Activated CD8-positive, alpha-beta T cell treated with anti-CD3 and anti-CD28 coated beads, Interleukin-2, amount 10 ng/mL, durations not matched to agents 7 days and 5 days (primary cell): ENCODE measurements at regions of chr1 and their contacts with region 1.

Region 1: GRCh38 chr1:93078986-93079654 is at the start of gene MTF2:
- DNase-seq: peak; percentile 96
- ATAC-seq: peak; percentile 94
- H3K4me3 Mint-ChIP-seq: peak within 1 kb of the TSS; percentile 97
- H3K27ac Mint-ChIP-seq: peak within 1 kb of the TSS; percentile 98
- H3K4me1 Mint-ChIP-seq: peaks cover 37% of the 10 kb centered on the region
- H3K27me3 Mint-ChIP-seq: peaks cover 2% of the 10 kb centered on the region
- total RNA-seq, gene MTF2: 56.4 to 63.2 TPM

Region 2: GRCh38 chr1:92511541-92511940 is 567.6 kb before region 1 on chr1:
- CTCF ChIA-PET with region 1: no interaction called
- POLR2A ChIA-PET with region 1: no interaction called
- DNase-seq: no peak
- ATAC-seq: no peak
- H3K4me3 Mint-ChIP-seq: no peak overlapping the region
- H3K27ac Mint-ChIP-seq: no peak overlapping the region
- H3K4me1 Mint-ChIP-seq: peaks cover 23% of the 10 kb centered on the region
- H3K27me3 Mint-ChIP-seq: no peaks in the 10 kb centered on the region

Region 3: GRCh38 chr1:92551916-92552315 is 527.2 kb before region 1 on chr1:
- CTCF ChIA-PET with region 1: no interaction called
- POLR2A ChIA-PET with region 1: no interaction called
- DNase-seq: no peak
- ATAC-seq: no peak
- H3K4me3 Mint-ChIP-seq: no peak overlapping the region
- H3K27ac Mint-ChIP-seq: no peak overlapping the region
- H3K4me1 Mint-ChIP-seq: peaks cover 19% of the 10 kb centered on the region
- H3K27me3 Mint-ChIP-seq: no peaks in the 10 kb centered on the region

Region 4: GRCh38 chr1:92831762-92832536 is 247.2 kb before region 1 on chr1 and contains the start of gene RPL5:
- CTCF ChIA-PET with region 1: interaction called, 7 read pairs
- POLR2A ChIA-PET with region 1: interaction called, 12 read pairs
- DNase-seq: peak; percentile 98
- ATAC-seq: peak; percentile 91
- H3K4me3 Mint-ChIP-seq: peak within 1 kb of the TSS; percentile 96
- H3K27ac Mint-ChIP-seq: peak within 1 kb of the TSS; percentile 98
- H3K4me1 Mint-ChIP-seq: peaks cover 43% of the 10 kb centered on the region
- H3K27me3 Mint-ChIP-seq: no peaks in the 10 kb centered on the region
- total RNA-seq, gene RPL5: 816 to 821 TPM

Region 5: GRCh38 chr1:93021539-93022134 is 57.5 kb before region 1 on chr1:
- CTCF ChIA-PET with region 1: interaction called, 20 read pairs
- POLR2A ChIA-PET with region 1: interaction called, 5 read pairs
- DNase-seq: peak; percentile 31
- ATAC-seq: peak; percentile 80
- H3K4me3 Mint-ChIP-seq: no peak overlapping the region
- H3K27ac Mint-ChIP-seq: no peak overlapping the region
- H3K4me1 Mint-ChIP-seq: peaks cover 3% of the 10 kb centered on the region
- H3K27me3 Mint-ChIP-seq: peaks cover 29% of the 10 kb centered on the region

Region 6: GRCh38 chr1:93042187-93043056 is 36.7 kb before region 1 on chr1:
- CTCF ChIA-PET with region 1: interaction called, 13 read pairs
- POLR2A ChIA-PET with region 1: interaction called, 21 read pairs
- DNase-seq: peak; percentile 67
- ATAC-seq: peak; percentile 98
- H3K4me3 Mint-ChIP-seq: peak overlapping the region; percentile 77
- H3K27ac Mint-ChIP-seq: peak overlapping the region; percentile 93
- H3K4me1 Mint-ChIP-seq: peaks cover 31% of the 10 kb centered on the region
- H3K27me3 Mint-ChIP-seq: no peaks in the 10 kb centered on the region

Region 7: DNA sequence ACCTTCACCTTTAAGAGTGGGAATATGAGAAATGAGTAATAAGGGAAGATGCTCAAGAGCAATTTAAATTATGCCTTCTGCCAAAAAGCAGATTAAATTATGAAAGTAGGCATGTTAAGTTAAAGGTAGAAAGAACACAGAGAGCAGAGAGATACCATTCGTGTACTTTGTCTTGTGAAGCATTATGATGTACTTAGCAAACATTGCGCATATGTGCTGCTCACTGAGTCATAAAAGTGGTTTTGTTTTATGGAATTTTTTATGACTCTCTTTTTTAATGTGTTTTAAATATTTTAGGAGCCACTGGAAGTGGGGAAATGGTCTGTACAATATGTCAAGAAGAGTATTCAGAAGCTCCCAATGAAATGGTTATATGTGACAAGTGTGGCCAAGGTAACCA is 35.3 kb after region 1 on chr1:
- CTCF ChIA-PET with region 1: interaction called, 13 read pairs
- POLR2A ChIA-PET with region 1: interaction called, 6 read pairs
- DNase-seq: no peak
- ATAC-seq: no peak
- H3K4me3 Mint-ChIP-seq: no peak overlapping the region
- H3K27ac Mint-ChIP-seq: no peak overlapping the region
- H3K4me1 Mint-ChIP-seq: peaks cover 13% of the 10 kb centered on the region
- H3K27me3 Mint-ChIP-seq: no peaks in the 10 kb centered on the region

Region 8: DNA sequence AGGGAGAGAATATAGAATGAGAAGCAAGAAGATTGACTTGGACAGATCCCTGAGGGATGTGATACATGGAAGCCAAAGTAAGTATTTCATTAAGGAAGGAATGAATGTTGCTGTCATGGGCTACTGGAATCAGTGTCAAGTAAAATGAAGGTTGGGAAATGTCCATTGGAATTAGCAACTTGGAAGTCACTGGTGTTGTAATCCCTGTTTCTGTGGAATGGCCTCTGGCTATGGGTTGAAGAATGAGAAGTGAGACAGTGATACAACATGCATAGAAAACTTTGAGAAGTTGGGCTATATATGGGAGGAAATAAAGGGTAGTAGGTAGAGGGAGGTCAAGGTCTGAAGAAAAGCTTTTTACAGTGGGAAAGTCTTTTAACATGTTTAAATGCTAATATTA is 156.2 kb after region 1 on chr1:
- CTCF ChIA-PET with region 1: no interaction called
- POLR2A ChIA-PET with region 1: no interaction called
- DNase-seq: no peak
- ATAC-seq: no peak
- H3K4me3 Mint-ChIP-seq: no peak overlapping the region
- H3K27ac Mint-ChIP-seq: no peak overlapping the region
- H3K4me1 Mint-ChIP-seq: no peaks in the 10 kb centered on the region
- H3K27me3 Mint-ChIP-seq: no peaks in the 10 kb centered on the region

Region 9: GRCh38 chr1:93345633-93346420 is 266.7 kb after region 1 on chr1 and contains the start of gene DR1:
- CTCF ChIA-PET with region 1: interaction called, 5 read pairs
- POLR2A ChIA-PET with region 1: interaction called, 28 read pairs
- DNase-seq: peak; percentile 93
- ATAC-seq: peak; percentile 71
- H3K4me3 Mint-ChIP-seq: peak within 1 kb of the TSS; percentile 91
- H3K27ac Mint-ChIP-seq: peak within 1 kb of the TSS; percentile 98
- H3K4me1 Mint-ChIP-seq: peaks cover 19% of the 10 kb centered on the region
- H3K27me3 Mint-ChIP-seq: no peaks in the 10 kb centered on the region
- total RNA-seq, gene DR1: 94.0 to 94.1 TPM